HepG2 (cell line): ENCODE measurements at regions of chr4 and their contacts with region 1.

Region 1: GRCh38 chr4:106258145-106259045 is 57.6 kb downstream of the TBCK start:
- DNase-seq: peak; percentile 95
- ATAC-seq: peak; percentile 91
- H3K4me3 ChIP-seq: peak overlapping the region in 2 of 3 experiments; percentile 9 to 21; a peak in 2 of 6 replicates
- H3K27ac ChIP-seq: peak overlapping the region; percentile 94
- H3K4me1 ChIP-seq: peaks cover 85% of the 10 kb centered on the region
- H3K27me3 ChIP-seq: no peaks in the 10 kb centered on the region
- CTCF ChIP-seq: no peak
- EP300 ChIP-seq: peak; percentile 75 to 100; a peak in 2 of 4 replicates
- POLR2A ChIP-seq: no peak
- RAD21 ChIP-seq: no peak

Region 2: GRCh38 chr4:106287353-106287969 is 29.1 kb after region 1 on chr4:
- CTCF ChIA-PET with region 1: no interaction called
- POLR2A ChIA-PET with region 1: interaction called, 31 read pairs
- in situ Hi-C with region 1: no loop called
- intact Hi-C with region 1: loop called (anchors 2 kb)
- DNase-seq: peak; percentile 97
- ATAC-seq: peak; percentile 100
- H3K4me3 ChIP-seq: no peak overlapping the region
- H3K27ac ChIP-seq: peak overlapping the region; percentile 98
- H3K4me1 ChIP-seq: peaks cover 37% of the 10 kb centered on the region
- H3K27me3 ChIP-seq: no peaks in the 10 kb centered on the region
- CTCF ChIP-seq: no peak
- EP300 ChIP-seq: peak; percentile 88 to 98
- POLR2A ChIP-seq: no peak
- RAD21 ChIP-seq: no peak